PC-3 (cell line): ENCODE measurements at regions of chr3 and their contacts with region 1.

Region 1: DNA sequence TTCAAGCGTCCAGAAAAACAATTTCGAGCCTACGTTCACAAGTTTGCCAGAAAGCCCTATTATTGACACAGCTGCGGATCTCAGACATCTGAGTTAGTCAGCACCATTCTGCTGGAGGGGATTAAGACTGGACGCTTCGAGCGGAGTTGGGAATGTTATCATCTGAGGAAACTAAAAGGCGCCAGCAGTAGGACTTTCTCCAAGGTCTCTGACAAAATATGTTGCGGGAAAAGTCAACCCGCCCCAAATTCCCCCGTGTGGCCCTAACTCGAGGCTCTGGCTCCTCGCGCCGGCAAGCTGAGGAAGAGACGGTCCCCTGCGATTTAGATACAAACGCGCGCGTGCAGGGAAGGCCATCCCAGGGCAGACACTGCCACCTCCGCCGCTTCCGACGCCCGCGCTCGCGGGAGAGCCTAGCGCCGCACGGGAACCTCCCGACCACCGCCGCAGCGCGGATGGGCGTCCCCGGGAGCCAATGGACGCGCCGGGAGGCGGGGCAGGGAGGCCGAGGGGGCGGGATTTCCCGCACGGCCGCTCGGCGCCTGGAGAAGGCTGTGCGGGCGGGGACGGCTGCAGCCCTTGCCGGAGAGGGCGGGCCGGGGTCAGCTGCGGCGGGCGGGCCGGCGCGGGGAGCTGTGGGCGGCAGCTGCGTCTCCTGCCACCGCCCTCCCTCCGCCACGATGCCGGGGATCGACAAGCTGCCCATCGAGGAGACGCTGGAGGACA is at the start of gene APPL1:
- DNase-seq: peak; percentile 95
- ATAC-seq: peak; percentile 82
- H3K4me3 ChIP-seq: peak within 1 kb of the TSS; percentile 89
- H3K27ac ChIP-seq: peak within 1 kb of the TSS; percentile 74
- H3K4me1 ChIP-seq: peaks cover 30% of the 10 kb centered on the region
- H3K27me3 ChIP-seq: no peaks in the 10 kb centered on the region
- CTCF ChIP-seq: no peak
- total RNA-seq, gene APPL1: 32.5 and 34.6 TPM in 2 replicates

Region 2: GRCh38 chr3:57199895-57200297 is 27.5 kb before region 1 on chr3 and contains the start of gene HESX1:
- CTCF ChIA-PET with region 1: no interaction called
- POLR2A ChIA-PET with region 1: interaction called, 18 read pairs
- intact Hi-C with region 1: no loop called
- DNase-seq: no peak
- ATAC-seq: no peak
- H3K4me3 ChIP-seq: no peak within 1 kb of the TSS
- H3K27ac ChIP-seq: no peak within 1 kb of the TSS
- H3K4me1 ChIP-seq: no peaks in the 10 kb centered on the region
- H3K27me3 ChIP-seq: no peaks in the 10 kb centered on the region
- CTCF ChIP-seq: no peak
- total RNA-seq, gene HESX1: 3.9 TPM in 1 of 2 replicates, not detected in the other

Region 3: DNA sequence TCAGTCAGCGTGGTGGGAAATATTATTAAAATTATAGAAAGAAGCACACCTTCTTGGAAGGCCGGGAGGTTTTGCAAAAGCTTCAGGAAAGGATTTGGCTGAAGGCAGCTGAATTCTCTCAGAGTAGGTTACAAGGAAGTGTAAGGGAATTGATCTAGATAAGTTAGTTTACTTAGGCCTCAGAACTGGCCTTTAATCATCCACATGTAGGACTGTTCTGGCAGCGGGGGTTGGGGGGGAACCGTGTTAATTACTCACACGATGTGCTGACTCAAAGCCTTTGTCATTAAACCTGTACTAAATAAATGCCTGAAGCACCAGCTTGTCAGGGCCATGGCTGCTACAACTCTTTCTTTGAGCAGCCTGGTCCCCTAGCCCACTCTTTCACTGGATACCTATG is 52.3 kb after region 1 on chr3:
- CTCF ChIA-PET with region 1: no interaction called
- POLR2A ChIA-PET with region 1: no interaction called
- intact Hi-C with region 1: no loop called
- DNase-seq: no peak
- ATAC-seq: 0 out of 2 replicates have a peak, but pooled peaks have one; percentile 10
- H3K4me3 ChIP-seq: no peak overlapping the region
- H3K27ac ChIP-seq: no peak overlapping the region
- H3K4me1 ChIP-seq: peaks cover 8% of the 10 kb centered on the region
- H3K27me3 ChIP-seq: no peaks in the 10 kb centered on the region
- CTCF ChIP-seq: no peak

Region 4: GRCh38 chr3:57434041-57434440 is 206.7 kb after region 1 on chr3:
- CTCF ChIA-PET with region 1: no interaction called
- POLR2A ChIA-PET with region 1: no interaction called
- intact Hi-C with region 1: loop called (anchors 5 kb)
- DNase-seq: peak; percentile 84
- ATAC-seq: peak; percentile 92
- H3K4me3 ChIP-seq: no peak overlapping the region
- H3K27ac ChIP-seq: no peak overlapping the region
- H3K4me1 ChIP-seq: no peaks in the 10 kb centered on the region
- H3K27me3 ChIP-seq: no peaks in the 10 kb centered on the region
- CTCF ChIP-seq: peak; percentile 80

Region 5: GRCh38 chr3:57446318-57446841 is 219.0 kb after region 1 on chr3:
- CTCF ChIA-PET with region 1: no interaction called
- POLR2A ChIA-PET with region 1: no interaction called
- intact Hi-C with region 1: loop called (anchors 1 kb)
- DNase-seq: no peak
- ATAC-seq: no peak
- H3K4me3 ChIP-seq: 0 out of 2 replicates have a peak overlapping the region, but pooled peaks have one; percentile 17
- H3K27ac ChIP-seq: no peak overlapping the region
- H3K4me1 ChIP-seq: peaks cover 26% of the 10 kb centered on the region
- H3K27me3 ChIP-seq: no peaks in the 10 kb centered on the region
- CTCF ChIP-seq: no peak

Region 6: DNA sequence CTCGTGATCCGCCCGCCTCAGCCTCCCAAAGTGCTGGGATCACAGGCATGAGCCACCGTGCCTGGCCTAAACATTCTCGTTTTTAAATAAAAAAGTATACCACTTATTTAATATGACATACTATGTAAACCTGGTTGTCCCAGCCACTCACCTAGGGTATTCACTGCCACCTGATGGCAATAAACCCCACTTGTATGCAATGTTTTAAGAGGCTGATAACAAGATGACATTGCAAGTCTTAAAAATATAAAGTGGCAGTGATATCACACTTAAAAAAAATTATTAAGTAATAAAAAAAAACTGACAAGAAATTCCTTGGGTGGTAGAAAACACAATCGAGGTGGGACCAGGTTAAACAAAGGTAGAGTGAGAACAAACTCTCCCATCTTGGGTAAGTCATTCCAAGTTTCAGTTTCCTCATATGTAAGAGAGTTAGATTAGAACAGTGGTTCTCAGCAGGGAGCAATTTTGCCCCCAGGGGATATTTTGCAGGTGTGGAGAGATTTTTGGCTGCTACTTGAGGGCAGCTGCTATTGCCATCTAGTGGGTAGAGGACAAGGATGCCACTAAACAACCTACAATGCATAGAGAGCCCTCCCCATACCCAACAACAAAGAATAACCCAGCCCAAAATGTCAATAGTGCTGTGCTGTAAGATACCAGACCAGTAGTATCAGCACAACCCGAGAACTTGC is 355.3 kb after region 1 on chr3:
- CTCF ChIA-PET with region 1: no interaction called
- POLR2A ChIA-PET with region 1: no interaction called
- intact Hi-C with region 1: loop called (anchors 5 kb)
- DNase-seq: peak; percentile 83
- ATAC-seq: peak; percentile 64
- H3K4me3 ChIP-seq: no peak overlapping the region
- H3K27ac ChIP-seq: 0 out of 2 replicates have a peak overlapping the region, but pooled peaks have one; percentile 1
- H3K4me1 ChIP-seq: peaks cover 23% of the 10 kb centered on the region
- H3K27me3 ChIP-seq: no peaks in the 10 kb centered on the region
- CTCF ChIP-seq: peak; percentile 73